ENCODE measurements at regions of chr10 and their contacts with region 1.

Region 1: DNA sequence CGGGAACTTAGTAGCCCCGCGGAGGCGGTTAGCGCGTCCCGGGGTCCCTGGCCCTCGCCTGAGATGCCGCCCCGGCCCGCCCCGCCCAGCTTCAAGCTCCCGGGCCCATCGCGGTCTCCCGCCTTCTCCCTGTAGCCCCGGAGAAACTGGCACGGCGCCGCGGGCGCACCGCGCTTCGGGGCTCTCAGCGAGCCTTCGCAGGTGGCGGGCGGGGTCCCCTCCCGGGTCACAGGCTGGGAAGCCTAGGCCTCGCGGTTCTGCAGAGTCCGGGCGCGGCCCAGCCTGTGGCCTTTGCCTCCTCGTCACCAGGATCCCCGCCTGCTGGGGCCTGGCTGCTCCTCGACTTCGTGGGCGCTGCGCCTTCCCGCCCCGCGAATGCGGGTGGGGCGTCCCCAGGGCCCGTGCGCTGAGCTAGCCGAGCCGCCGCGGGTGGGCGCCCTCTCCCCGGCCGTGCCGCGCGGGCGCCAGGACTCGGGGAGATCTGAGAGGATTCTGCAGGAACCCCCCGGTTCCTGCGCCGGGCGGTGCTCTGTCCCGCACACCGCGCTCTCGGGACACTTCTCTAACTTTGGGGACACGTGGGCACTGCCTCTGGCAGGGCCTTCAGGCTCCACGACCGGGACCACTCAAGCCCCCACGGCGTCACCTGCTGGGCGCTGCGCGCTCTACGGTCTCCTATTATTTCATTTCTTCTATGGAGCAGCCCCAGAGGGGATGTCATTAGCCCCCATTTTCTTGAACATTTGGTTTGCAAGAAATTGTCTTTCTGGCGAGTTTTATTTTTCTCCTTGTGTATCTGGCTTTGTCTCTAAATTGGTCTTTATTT is 682 bp upstream of the RGS10 start:
- DNase-seq: peak; percentile 69 to 75
- ATAC-seq: peak; percentile 78 to 80
- H3K4me3 ChIP-seq: peak overlapping the region; percentile 78
- H3K27ac ChIP-seq: peak overlapping the region; percentile 95 to 98
- H3K4me1 ChIP-seq: peaks cover 20% of the 10 kb centered on the region
- CTCF ChIP-seq: peak; percentile 95
- EP300 ChIP-seq: no peak
- POLR2A ChIP-seq: peak; percentile 29; the same call in 1 of the 2 replicates
- RAD21 ChIP-seq: peak; percentile 41 to 61

Region 2: GRCh38 chr10:119189811-119190282 is 353.4 kb before region 1 on chr10:
- CTCF ChIA-PET with region 1: interaction called, 16 read pairs
- POLR2A ChIA-PET with region 1: no interaction called
- DNase-seq: no peak
- ATAC-seq: peak; percentile 14 to 52; a peak in 4 of 6 replicates
- H3K4me3 ChIP-seq: no peak overlapping the region
- H3K27ac ChIP-seq: peak overlapping the region; percentile 46 to 76
- H3K4me1 ChIP-seq: peaks cover 17% of the 10 kb centered on the region
- CTCF ChIP-seq: no peak
- EP300 ChIP-seq: no peak
- POLR2A ChIP-seq: no peak
- RAD21 ChIP-seq: no peak

Region 3: DNA sequence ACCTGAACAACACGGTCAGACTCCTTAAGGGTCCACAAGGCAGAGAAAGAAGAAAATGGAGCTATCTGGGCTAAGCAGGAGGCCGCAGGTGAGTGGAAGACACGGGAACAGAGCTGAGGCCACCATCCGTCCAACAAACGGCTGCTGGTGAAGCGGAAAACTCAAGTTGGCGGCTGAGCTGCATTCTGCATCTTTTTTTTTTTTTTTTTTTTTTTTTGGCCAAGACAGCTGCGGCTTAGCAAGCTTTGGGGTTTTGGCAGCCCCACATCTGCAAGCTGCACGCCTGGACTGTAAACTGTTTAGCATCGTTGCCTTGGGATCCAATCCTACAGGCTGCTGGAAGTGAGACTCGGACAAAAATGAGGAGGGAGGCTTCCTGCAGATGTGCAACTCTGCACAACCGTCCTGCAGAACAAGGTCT is 38.1 kb before region 1 on chr10:
- CTCF ChIA-PET with region 1: no interaction called
- POLR2A ChIA-PET with region 1: no interaction called
- DNase-seq: no peak
- ATAC-seq: no peak
- H3K4me3 ChIP-seq: no peak overlapping the region
- H3K27ac ChIP-seq: no peak overlapping the region
- H3K4me1 ChIP-seq: no peaks in the 10 kb centered on the region
- CTCF ChIP-seq: no peak
- EP300 ChIP-seq: no peak
- POLR2A ChIP-seq: no peak
- RAD21 ChIP-seq: no peak

Region 4: DNA sequence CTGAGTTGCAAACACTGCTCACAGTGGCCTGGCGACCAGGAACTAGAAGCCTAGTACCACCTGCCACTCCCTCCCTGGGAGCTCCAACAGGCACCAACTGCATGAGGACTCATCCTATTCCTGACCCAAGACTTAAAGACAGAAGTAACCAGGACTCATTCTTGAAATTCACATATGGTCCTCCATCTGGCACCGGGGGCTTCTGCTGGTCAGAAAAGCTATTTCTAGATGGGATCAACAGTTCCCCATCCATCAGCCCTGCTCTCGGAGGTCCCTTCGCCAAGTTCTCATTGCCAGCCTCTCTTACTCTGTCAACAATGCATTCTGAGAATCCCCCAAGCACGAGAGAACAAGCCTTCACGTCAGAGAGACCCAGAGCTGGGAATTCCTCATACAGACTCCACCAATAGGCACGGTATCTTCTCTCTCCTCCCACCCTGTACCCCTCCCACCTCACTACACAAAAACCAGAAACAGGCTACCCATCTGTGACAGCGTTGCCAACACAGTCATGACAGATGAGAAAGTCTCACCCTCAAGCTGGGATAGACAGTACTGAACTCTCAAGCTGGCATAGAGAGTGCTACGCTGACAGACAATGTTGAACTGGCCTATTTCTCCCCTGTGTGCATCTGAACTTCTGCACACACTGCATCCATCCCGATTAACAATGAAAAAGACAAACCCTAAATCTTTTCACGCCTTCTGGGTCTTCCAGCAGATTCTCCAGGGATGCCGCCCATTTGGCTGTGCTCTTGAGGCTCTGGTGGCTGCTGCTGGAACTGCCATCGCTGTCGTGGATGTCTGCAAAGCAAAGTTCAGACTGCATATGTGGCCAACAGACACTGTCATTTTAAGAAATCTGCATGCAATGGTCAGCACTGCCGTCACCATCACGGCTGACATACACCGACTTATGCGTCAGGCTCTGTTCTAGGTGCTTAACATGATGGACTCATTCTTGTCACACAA is 16.3 kb before region 1 on chr10:
- CTCF ChIA-PET with region 1: interaction called, 17 read pairs
- POLR2A ChIA-PET with region 1: interaction called, 9 read pairs
- DNase-seq: peak in 1 of 2 experiments; percentile 25
- ATAC-seq: peak; percentile 66 to 82; a peak in 4 of 6 replicates
- H3K4me3 ChIP-seq: no peak overlapping the region
- H3K27ac ChIP-seq: no peak overlapping the region
- H3K4me1 ChIP-seq: peaks cover 4% of the 10 kb centered on the region
- CTCF ChIP-seq: no peak
- EP300 ChIP-seq: no peak
- POLR2A ChIP-seq: no peak
- RAD21 ChIP-seq: no peak

Region 5: GRCh38 chr10:119555178-119555784 is 12.1 kb after region 1 on chr10:
- CTCF ChIA-PET with region 1: interaction called, 18 read pairs
- POLR2A ChIA-PET with region 1: no interaction called
- DNase-seq: no peak
- ATAC-seq: no peak
- H3K4me3 ChIP-seq: no peak overlapping the region
- H3K27ac ChIP-seq: no peak overlapping the region
- H3K4me1 ChIP-seq: no peaks in the 10 kb centered on the region
- CTCF ChIP-seq: no peak
- EP300 ChIP-seq: no peak
- POLR2A ChIP-seq: no peak
- RAD21 ChIP-seq: no peak

Region 6: GRCh38 chr10:119725828-119726675 is 182.9 kb after region 1 on chr10 and contains the start of gene INPP5F:
- CTCF ChIA-PET with region 1: no interaction called
- POLR2A ChIA-PET with region 1: no interaction called
- DNase-seq: peak; percentile 96 to 98
- ATAC-seq: peak; percentile 90 to 96
- H3K4me3 ChIP-seq: peak within 1 kb of the TSS; percentile 82
- H3K27ac ChIP-seq: peak within 1 kb of the TSS; percentile 77 to 96
- H3K4me1 ChIP-seq: peaks cover 13% of the 10 kb centered on the region; the same call in 2 of the 3 replicates
- CTCF ChIP-seq: peak; percentile 24; the same call in 1 of the 3 replicates
- EP300 ChIP-seq: no peak
- POLR2A ChIP-seq: no peak
- RAD21 ChIP-seq: no peak; a peak in 1 of 5 replicates
- polyA plus RNA-seq, gene INPP5F: 7.7 and 8.3 TPM in 2 replicates